Posterior vena cava (tissue), 2 donors: ENCODE measurements at regions of chr9 and their contacts with region 1.

Region 1: DNA sequence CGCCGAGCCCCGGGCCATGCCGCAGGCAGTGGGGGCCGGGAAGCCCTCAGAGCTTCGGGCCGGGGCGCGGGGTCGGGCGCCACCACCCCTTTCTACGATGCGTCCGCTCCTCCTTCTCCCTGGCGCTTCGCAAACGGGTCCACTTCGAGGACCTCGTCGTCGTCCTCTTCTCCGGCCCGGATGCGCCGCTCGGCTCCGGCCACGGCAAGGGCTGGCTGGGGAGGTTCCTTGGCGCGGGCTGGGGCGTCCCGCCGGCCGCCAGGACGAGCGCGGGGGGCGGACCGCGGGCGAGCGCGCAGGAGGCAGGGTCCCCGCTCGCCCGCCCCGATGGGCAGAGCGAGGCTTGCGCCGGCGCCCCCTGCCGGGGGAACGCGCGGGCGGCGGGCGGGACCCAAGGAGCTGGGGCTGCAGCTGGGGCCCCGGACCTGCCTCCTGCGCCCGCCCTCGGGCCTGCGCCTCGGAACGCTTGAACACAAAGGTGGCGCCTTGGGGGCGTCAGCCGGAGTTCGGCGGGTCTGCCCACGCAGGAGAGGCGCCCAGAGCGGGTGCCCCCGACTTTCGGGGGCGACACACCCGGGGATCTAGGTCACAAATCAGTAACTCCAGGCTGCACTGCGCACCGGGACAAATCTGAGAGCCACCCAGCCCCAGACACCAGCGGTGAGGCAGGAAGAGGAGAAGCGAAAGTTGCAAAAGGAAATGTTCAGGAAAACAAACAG is at the start of gene ROR2:
- DNase-seq: no peak
- total RNA-seq, gene ROR2: 24.7 to 28.4 TPM

Region 2: GRCh38 chr9:91775011-91775707 is 174.9 kb before region 1 on chr9:
- intact Hi-C with region 1: loop called (anchors 5 to 10 kb)
- DNase-seq: no peak

Region 3: GRCh38 chr9:91898451-91899218 is 51.5 kb before region 1 on chr9:
- intact Hi-C with region 1: loop called in 1 of 2 experiments (anchors 5 kb)
- DNase-seq: no peak

Region 4: DNA sequence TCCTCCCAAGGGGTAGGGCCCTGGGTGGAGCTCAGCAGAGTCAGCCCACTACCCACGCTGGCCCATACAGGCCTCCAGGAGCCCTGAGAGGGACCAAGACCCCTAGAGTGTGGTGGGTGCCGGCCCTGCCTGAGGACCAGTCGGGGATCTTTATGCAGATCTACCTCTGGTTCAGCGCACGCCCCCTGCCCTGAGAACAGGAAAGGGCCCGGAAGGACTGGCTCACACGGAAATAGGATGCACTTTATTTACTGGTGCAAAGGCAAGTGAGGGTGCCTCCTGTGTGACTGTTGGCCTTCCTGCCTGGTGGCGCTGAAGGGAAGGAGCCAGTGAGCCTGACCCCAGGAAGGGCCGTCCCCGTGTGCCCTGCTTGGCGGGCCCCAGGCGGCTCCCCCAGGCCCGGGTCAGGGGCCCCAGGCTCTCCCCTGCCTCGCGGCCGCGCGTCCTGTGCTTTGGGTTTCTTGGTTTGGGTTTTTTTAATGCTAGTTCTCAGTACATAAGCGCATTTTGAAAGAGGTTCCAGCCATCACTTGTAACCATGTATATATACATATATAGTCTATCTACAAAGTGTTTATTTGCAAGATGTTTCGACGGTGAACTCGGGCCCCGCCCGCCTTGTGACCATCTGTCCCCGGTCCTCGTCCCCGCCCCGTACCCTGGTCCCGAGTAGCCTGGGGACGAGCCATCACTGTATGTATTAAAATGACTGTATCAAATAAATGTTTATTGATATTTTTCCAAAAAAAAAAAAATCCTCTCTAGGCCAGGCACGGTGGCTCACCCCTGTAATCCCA is 76.3 kb after region 1 on chr9:
- intact Hi-C with region 1: no loop called
- DNase-seq: no peak